ENCODE measurements at regions of chr19 and their contacts with region 1.

Region 1: DNA sequence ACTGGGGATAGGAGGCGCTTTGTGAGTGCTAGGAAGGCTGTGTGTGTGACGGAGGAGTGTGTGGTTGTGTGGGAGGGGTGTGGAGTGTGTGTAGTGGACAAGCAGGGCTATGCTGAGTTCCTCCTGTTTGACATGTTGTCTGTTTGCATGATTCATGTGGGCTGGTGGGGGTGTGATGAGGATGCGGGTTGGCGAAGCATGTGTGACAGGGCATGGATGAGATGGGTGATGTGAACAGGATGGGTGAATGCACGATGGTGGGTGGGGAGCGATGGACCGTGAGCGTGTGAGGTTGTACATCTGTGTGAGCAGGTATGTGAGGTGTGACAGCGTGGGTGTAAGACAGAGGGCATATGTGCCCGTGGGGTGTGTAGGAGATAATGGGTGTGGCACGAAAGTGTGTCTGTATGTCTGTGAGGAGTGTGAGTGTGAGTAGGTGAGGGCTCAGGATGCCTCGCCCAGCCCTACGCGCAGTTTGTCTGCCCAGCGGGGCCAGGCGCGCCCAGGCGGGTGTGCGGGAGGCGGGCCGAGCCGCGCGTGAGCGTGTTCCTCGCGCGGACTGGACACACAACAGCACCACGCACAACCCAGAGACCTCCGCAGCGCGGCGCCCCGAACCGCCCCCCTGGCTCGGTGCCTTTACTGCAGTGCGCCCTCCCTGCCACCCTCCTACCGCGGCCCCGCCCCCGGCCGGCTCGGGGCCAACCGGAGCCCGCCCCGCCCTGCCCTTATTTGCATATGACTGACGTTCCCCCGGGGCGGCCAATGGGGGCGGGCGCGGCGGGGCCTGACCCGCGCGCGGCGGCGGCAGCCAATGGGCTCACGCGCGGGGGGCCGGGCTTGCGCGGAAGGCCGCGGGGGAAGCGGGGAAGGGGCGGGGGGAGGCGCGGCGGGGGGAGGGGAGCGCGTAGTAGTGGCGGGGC is 14.4 kb downstream of the CIC start:
- DNase-seq: peak; percentile 97
- ATAC-seq: peak; percentile 66
- H3K4me3 Mint-ChIP-seq: no peak overlapping the region
- H3K27ac Mint-ChIP-seq: no peak overlapping the region
- H3K4me1 Mint-ChIP-seq: peaks cover 40% of the 10 kb centered on the region
- H3K27me3 Mint-ChIP-seq: no peaks in the 10 kb centered on the region

Region 2: DNA sequence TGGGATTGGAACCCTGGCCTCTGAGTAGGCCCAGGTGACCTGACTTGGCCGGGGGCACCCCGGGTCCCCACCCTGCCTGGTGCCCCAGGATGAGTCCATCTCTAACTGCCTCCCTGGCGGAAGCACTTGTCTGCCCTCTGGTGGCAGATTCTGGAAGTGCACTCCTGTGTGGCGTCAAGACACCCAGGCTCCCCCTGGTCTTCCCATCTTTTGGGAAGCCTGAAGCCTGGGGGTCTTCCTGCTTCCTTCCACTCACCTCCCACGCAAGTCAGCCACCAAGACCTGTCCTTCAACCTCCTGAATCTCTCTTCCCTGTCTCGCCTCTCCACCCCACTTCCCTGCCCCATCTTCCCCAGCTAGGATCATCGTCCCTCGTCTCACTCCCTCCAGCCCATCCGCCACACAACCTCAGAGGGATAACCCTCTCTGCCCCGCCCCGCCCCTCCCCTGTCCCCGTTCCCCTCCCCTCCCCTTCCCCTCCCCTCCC is 331.7 kb before region 1 on chr19:
- POLR2A ChIA-PET with region 1: no interaction called
- DNase-seq: peak; percentile 91
- ATAC-seq: peak; percentile 80
- H3K4me3 Mint-ChIP-seq: no peak overlapping the region
- H3K27ac Mint-ChIP-seq: peak overlapping the region; percentile 61
- H3K4me1 Mint-ChIP-seq: peaks cover 12% of the 10 kb centered on the region
- H3K27me3 Mint-ChIP-seq: no peaks in the 10 kb centered on the region

Region 3: DNA sequence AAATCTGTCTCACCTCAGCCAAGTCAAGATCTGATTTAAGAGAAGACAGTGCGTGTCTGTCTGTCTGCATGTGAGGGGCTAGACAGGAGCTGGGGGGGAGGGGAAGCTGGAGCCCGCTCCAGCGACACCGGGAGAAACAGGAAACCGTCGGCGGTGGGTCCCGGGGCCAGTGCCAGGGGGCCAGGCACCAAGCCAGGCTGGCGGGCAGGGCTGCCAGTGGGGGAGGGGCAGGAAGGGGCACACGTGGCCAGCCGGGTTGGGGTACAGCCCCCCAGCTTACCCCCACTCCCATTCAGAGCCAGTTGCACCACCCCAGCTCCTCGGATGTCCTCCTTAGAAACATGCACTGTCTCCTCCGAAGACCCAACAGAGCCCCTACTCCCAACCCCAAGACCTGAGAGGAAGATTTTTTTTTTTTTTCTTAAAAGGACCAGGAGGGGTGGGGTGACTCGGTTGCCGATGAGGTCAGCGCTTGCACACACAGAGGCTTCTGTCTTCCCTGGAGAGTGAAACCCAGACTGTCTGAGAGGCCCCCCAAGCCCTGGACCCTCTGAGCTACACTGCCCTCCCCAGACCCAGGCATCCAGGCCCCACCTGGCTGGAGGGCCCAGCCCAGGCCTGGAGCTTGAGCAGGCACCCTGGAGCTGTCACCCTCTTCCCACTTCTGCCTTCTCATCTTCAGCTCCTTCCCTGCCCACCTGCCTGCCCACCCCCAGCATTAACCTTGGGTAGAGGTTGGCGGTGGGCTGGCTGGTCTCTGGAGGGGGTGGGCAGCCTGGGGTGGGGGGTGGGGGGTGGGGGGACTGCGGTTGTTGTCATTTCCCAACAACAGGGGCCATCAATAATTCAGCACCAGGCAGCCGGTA is 32.5 kb before region 1 on chr19:
- POLR2A ChIA-PET with region 1: interaction called, 73 read pairs
- DNase-seq: peak; percentile 52
- ATAC-seq: no peak
- H3K4me3 Mint-ChIP-seq: peak overlapping the region; percentile 62
- H3K27ac Mint-ChIP-seq: peak overlapping the region; percentile 81
- H3K4me1 Mint-ChIP-seq: peaks cover 29% of the 10 kb centered on the region
- H3K27me3 Mint-ChIP-seq: peaks cover 1% of the 10 kb centered on the region

Region 4: GRCh38 chr19:42268704-42269477 is 14.5 kb before region 1 on chr19 and contains the start of gene CIC:
- POLR2A ChIA-PET with region 1: interaction called, 26 read pairs
- DNase-seq: peak; percentile 98
- ATAC-seq: peak; percentile 89
- H3K4me3 Mint-ChIP-seq: peak within 1 kb of the TSS; percentile 99
- H3K27ac Mint-ChIP-seq: no peak within 1 kb of the TSS
- H3K4me1 Mint-ChIP-seq: peaks cover 28% of the 10 kb centered on the region
- H3K27me3 Mint-ChIP-seq: no peaks in the 10 kb centered on the region
- total RNA-seq, gene CIC: 84.4 to 92.2 TPM